Adrenal gland (tissue), 19 donors: ENCODE measurements at regions of chr18 and their contacts with region 1.

Region 1: DNA sequence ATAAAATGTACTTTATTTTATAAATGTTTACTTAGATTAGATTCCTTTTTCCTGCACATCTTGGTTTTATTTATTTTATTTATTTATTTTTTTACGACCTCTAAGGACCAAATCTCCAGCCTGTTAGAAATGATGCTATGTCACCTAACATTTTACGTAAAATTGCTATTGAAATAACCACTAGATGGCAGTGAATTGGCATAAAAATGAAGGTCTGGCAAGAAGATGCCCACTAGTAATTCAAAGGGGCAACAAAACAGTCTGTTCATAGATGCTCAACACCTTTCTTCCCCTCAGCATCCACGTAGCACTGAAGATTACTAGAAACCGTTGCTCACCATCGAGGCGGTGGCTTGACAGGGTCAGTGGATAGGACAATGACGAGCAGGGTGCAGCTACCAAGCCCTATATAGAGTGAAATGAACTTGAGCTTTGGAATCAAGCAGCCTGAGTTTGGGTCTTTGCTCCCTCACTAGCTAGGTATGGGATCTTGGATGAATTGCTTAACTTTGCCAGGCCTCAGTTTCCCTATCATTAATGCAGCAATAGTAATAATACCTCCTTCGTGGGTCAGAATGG is 128.7 kb upstream of the L3MBTL4 start:
- DNase-seq: no peak
- H3K4me3 ChIP-seq: no peak overlapping the region
- H3K27ac ChIP-seq: no peak overlapping the region
- H3K4me1 ChIP-seq: peaks cover 0 to 10% of the 10 kb centered on the region in 2 donors
- H3K27me3 ChIP-seq: no peaks in the 10 kb centered on the region
- CTCF ChIP-seq: peak; percentile 39 to 68 (median 58)
- POLR2A ChIP-seq: no peak

Region 2: DNA sequence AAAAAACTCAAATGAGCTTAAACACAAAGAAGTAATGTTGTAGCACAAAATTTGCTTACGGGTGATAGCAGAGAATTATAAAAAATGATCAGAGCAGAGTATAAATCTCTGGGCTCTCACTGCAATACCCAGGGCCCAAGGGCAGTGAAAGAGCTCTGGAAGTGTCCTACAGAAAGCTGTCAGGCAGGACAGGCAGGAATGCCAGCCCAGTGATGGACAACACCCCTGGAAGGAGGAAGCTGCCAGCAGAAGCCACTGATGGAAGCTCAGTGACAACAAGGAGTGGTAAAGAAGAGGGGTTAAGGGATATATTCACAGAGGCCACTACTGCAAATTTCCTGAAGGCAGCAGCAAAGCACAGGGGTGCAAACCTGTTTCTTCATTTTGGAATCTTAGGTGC is 343.6 kb before region 1 on chr18:
- intact Hi-C with region 1: no loop called
- DNase-seq: no peak
- H3K4me3 ChIP-seq: no peak overlapping the region
- H3K27ac ChIP-seq: no peak overlapping the region
- H3K4me1 ChIP-seq: no peaks in the 10 kb centered on the region
- H3K27me3 ChIP-seq: no peaks in the 10 kb centered on the region
- CTCF ChIP-seq: no peak
- POLR2A ChIP-seq: no peak

Region 3: GRCh38 chr18:6885992-6886796 is 342.8 kb after region 1 on chr18:
- intact Hi-C with region 1: loop called (anchors 5 kb)
- DNase-seq: peak; percentile 43 to 79 (median 63)
- H3K4me3 ChIP-seq: no peak overlapping the region
- H3K27ac ChIP-seq: no peak overlapping the region
- H3K4me1 ChIP-seq: peaks cover 0 to 10% of the 10 kb centered on the region in 2 donors
- H3K27me3 ChIP-seq: no peaks in the 10 kb centered on the region
- CTCF ChIP-seq: peak; percentile 46 to 85 (median 76)
- POLR2A ChIP-seq: no peak